Heart left ventricle (tissue), 16 donors: ENCODE measurements at regions of chr2 and their contacts with region 1.

Region 1: GRCh38 chr2:49972699-49973098 is 818.4 kb upstream of the FSHR start:
- DNase-seq: no peak
- ATAC-seq: peak in 1 of 4 donors; percentile 50
- H3K4me3 ChIP-seq: no peak overlapping the region
- H3K27ac ChIP-seq: no peak overlapping the region
- H3K4me1 ChIP-seq: peaks cover 0 to 2% (median 0%) of the 10 kb centered on the region in 12 donors
- H3K27me3 ChIP-seq: no peaks in the 10 kb centered on the region
- CTCF ChIP-seq: no peak
- POLR2A ChIP-seq: no peak

Region 2: GRCh38 chr2:49959961-49960553 is 12.6 kb before region 1 on chr2:
- intact Hi-C with region 1: loop called in 1 of 10 experiments (anchors 1 kb)
- DNase-seq: no peak
- ATAC-seq: no peak
- H3K4me3 ChIP-seq: no peak overlapping the region
- H3K27ac ChIP-seq: no peak overlapping the region
- H3K4me1 ChIP-seq: no peaks in the 10 kb centered on the region
- H3K27me3 ChIP-seq: no peaks in the 10 kb centered on the region
- CTCF ChIP-seq: no peak
- POLR2A ChIP-seq: no peak